Activated CD4-positive, alpha-beta T cell treated with anti-CD3 and anti-CD28 coated beads, Interleukin-2, amount 10 ng/mL, durations not matched to agents 24 days and 14 days (primary cell): ENCODE measurements at regions of chr9 and their contacts with region 1.

Region 1: GRCh38 chr9:126860077-126860756 is at the start of gene ZBTB34:
- DNase-seq: peak; percentile 95
- H3K4me3 Mint-ChIP-seq: peak within 1 kb of the TSS; percentile 90
- H3K27ac Mint-ChIP-seq: peak within 1 kb of the TSS; percentile 82
- H3K4me1 Mint-ChIP-seq: peaks cover 22% of the 10 kb centered on the region
- H3K27me3 Mint-ChIP-seq: peaks cover 27% of the 10 kb centered on the region
- total RNA-seq, gene ZBTB34: 7.0 and 7.6 TPM in 2 replicates

Region 2: GRCh38 chr9:126804696-126805545 is 55.3 kb before region 1 on chr9 and contains the start of gene ZBTB43:
- intact Hi-C with region 1: loop called (anchors 2 kb)
- DNase-seq: peak; percentile 100
- H3K4me3 Mint-ChIP-seq: peak within 1 kb of the TSS; percentile 94
- H3K27ac Mint-ChIP-seq: peak within 1 kb of the TSS; percentile 98
- H3K4me1 Mint-ChIP-seq: peaks cover 31% of the 10 kb centered on the region
- H3K27me3 Mint-ChIP-seq: peaks cover 2% of the 10 kb centered on the region
- total RNA-seq, gene ZBTB43: 10.6 and 18.8 TPM in 2 replicates

Region 3: GRCh38 chr9:126914458-126915280 is 54.5 kb after region 1 on chr9 and contains the start of gene RALGPS1:
- intact Hi-C with region 1: loop called (anchors 5 kb)
- DNase-seq: peak; percentile 97
- H3K4me3 Mint-ChIP-seq: peak within 1 kb of the TSS; percentile 78
- H3K27ac Mint-ChIP-seq: no peak within 1 kb of the TSS
- H3K4me1 Mint-ChIP-seq: peaks cover 3% of the 10 kb centered on the region
- H3K27me3 Mint-ChIP-seq: peaks cover 24% of the 10 kb centered on the region
- total RNA-seq, gene RALGPS1: 1.7 and 2.0 TPM in 2 replicates